Endothelial cell of umbilical vein (primary cell): ENCODE measurements at regions of chr1 and their contacts with region 1.

Region 1: GRCh38 chr1:212558693-212559480 is 49.7 kb upstream of the ATF3 start:
- DNase-seq: peak; percentile 84
- H3K4me3 ChIP-seq: peak overlapping the region; percentile 58 to 74 (median 68)
- H3K27ac ChIP-seq: peak overlapping the region; percentile 69
- H3K4me1 ChIP-seq: peaks cover 18% of the 10 kb centered on the region
- H3K27me3 ChIP-seq: peaks cover 4 to 5% of the 10 kb centered on the region in 2 experiments
- CTCF ChIP-seq: no peak
- POLR2A ChIP-seq: peak; percentile 43

Region 2: DNA sequence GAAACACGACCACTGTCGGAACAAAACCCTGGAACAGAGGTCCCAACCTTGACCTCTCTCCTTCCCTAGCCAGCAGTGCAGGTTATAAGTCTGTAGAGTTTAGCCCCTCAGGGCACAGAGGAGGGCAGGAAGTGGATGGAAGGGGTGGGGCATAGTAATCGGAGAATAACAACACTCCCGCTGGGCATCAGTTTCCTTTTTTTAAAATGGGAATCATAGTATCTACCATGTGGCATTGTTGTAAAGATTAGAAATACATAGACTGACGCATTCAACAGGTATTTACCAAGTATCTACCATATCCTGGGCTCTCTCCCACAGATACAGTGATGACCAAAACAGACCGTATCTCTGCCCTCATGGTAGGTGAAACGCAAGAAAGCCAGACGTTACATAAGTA is 24.7 kb after region 1 on chr1:
- CTCF ChIA-PET with region 1: no interaction called
- POLR2A ChIA-PET with region 1: no interaction called
- dilution Hi-C with region 1: no loop called
- intact Hi-C with region 1: no loop called
- DNase-seq: no peak
- H3K4me3 ChIP-seq: no peak overlapping the region
- H3K27ac ChIP-seq: no peak overlapping the region
- H3K4me1 ChIP-seq: no peaks in the 10 kb centered on the region
- H3K27me3 ChIP-seq: peaks cover 22 to 33% of the 10 kb centered on the region in 2 experiments
- CTCF ChIP-seq: no peak
- POLR2A ChIP-seq: no peak

Region 3: DNA sequence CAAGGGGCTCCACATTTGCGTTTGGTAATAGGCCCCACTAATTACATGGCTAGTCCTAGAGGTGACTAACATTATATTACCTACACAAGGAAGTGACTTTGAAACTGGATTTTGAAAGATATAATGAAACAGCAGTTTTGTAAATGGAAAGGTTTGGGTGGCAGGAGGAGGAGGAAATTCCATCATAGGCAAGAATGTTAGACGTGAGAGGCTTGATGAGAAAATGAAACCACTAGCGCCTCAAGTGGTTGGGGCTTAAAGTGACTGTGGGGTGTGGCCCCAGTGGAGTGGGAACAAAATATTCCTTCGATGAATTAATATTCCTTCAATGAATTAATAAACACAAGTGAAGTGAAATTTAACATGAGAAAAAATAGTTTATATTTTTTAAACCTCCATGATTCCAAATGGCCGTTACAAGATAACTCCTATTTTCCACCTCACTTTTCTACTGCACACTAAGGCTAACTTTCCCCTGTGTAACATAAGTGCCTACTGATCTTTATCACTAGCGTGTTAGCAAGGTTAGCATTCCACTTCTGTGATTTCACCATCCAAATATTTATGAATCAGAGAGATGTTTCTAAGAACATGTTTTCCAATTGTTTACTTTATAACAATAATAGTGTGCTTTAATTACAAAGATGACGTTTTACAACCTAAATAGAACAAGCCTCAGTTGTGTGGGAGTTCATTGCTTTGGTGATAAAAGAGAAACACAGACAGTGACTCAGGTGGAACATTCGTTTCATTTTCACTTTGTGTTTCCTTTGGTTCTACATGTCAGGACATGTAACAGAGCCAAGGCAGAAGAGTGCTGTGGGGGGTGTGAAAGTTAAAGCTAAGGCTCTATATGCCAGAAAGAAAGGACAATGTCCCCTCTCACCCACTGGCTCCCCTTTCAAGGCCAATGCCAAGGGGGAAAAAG is 37.2 kb after region 1 on chr1:
- CTCF ChIA-PET with region 1: interaction called, 5 read pairs
- POLR2A ChIA-PET with region 1: no interaction called
- dilution Hi-C with region 1: no loop called
- intact Hi-C with region 1: loop called (anchors 1 kb)
- DNase-seq: peak; percentile 96
- H3K4me3 ChIP-seq: peak overlapping the region in 1 of 3 experiments; percentile 41
- H3K27ac ChIP-seq: peak overlapping the region; percentile 99
- H3K4me1 ChIP-seq: peaks cover 15% of the 10 kb centered on the region
- H3K27me3 ChIP-seq: peaks cover 8 to 11% of the 10 kb centered on the region in 2 experiments
- CTCF ChIP-seq: peak; percentile 55 to 81
- POLR2A ChIP-seq: no peak